ENCODE measurements at regions of chr9 and their contacts with region 1.

Region 1: DNA sequence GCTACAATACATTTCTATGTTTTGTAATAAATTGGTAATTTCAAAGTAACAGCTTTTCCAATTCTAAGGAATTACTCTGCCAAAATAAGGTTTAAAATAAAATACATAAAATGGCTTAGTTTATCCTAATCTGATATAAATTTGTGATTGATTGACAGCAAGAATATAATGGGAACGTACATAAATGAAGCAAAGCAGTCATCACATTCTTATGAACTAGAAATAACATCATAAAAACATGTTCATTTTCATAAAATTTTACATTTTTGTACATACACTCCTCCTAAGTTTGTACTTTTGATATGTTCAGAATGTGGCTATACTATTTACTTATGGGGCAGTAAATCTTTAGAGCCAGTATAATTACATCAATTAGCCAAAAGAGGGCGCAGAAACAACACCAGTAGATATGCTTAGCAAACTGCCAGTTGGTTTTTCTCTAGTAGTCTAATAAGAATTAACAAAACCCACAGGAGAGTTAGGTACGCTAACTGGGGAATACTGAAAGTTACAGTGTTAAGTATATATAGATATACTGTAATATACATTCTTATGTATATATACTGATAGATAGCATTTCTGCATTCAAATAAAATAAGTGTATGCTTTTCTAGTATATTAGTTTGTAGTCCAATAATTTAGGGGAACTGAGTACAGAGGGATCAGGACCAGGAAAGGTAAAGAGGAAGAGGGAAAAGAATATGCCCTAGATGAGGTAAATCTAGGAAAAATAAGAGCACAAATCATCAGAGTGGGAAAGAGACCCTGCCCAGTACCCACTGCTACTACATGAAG is 76.8 kb downstream of the ZDHHC21 start:
- DNase-seq: peak; percentile 39
- ATAC-seq: peak; percentile 82
- H3K4me3 ChIP-seq: no peak overlapping the region
- H3K27ac ChIP-seq: no peak overlapping the region
- H3K4me1 ChIP-seq: no peaks in the 10 kb centered on the region
- H3K27me3 ChIP-seq: no peaks in the 10 kb centered on the region
- CTCF ChIP-seq: peak; percentile 57
- EP300 ChIP-seq: no peak
- POLR2A ChIP-seq: no peak
- RAD21 ChIP-seq: peak; percentile 18; the same call in 1 of the 2 replicates

Region 2: GRCh38 chr9:14561929-14562405 is 54.4 kb before region 1 on chr9:
- CTCF ChIA-PET with region 1: no interaction called
- POLR2A ChIA-PET with region 1: no interaction called
- in situ Hi-C with region 1: no loop called
- intact Hi-C with region 1: loop called (anchors 10 kb)
- DNase-seq: peak; percentile 81
- ATAC-seq: peak; percentile 94
- H3K4me3 ChIP-seq: peak overlapping the region; percentile 38 to 59 (median 46)
- H3K27ac ChIP-seq: peak overlapping the region; percentile 49
- H3K4me1 ChIP-seq: peaks cover 64% of the 10 kb centered on the region
- H3K27me3 ChIP-seq: no peaks in the 10 kb centered on the region
- CTCF ChIP-seq: no peak
- EP300 ChIP-seq: no peak
- POLR2A ChIP-seq: no peak
- RAD21 ChIP-seq: no peak

Region 3: GRCh38 chr9:14652729-14653377 is 36.5 kb after region 1 on chr9:
- CTCF ChIA-PET with region 1: interaction called, 3 read pairs
- POLR2A ChIA-PET with region 1: no interaction called
- in situ Hi-C with region 1: no loop called
- intact Hi-C with region 1: loop called (anchors 1 kb)
- DNase-seq: peak; percentile 70
- ATAC-seq: peak; percentile 86
- H3K4me3 ChIP-seq: no peak overlapping the region
- H3K27ac ChIP-seq: no peak overlapping the region
- H3K4me1 ChIP-seq: no peaks in the 10 kb centered on the region
- H3K27me3 ChIP-seq: no peaks in the 10 kb centered on the region
- CTCF ChIP-seq: peak; percentile 76
- EP300 ChIP-seq: no peak
- POLR2A ChIP-seq: no peak
- RAD21 ChIP-seq: 0 out of 2 replicates have a peak, but pooled peaks have one; percentile 18

Region 4: GRCh38 chr9:14768405-14769229 is 152.2 kb after region 1 on chr9:
- CTCF ChIA-PET with region 1: interaction called, 13 read pairs
- POLR2A ChIA-PET with region 1: no interaction called
- in situ Hi-C with region 1: loop called (anchors 10 kb)
- intact Hi-C with region 1: loop called (anchors 1 kb)
- DNase-seq: peak; percentile 34
- ATAC-seq: no peak; the same call in none of the 3 replicates
- H3K4me3 ChIP-seq: no peak overlapping the region
- H3K27ac ChIP-seq: no peak overlapping the region
- H3K4me1 ChIP-seq: no peaks in the 10 kb centered on the region
- H3K27me3 ChIP-seq: no peaks in the 10 kb centered on the region
- CTCF ChIP-seq: peak; percentile 51
- EP300 ChIP-seq: no peak
- POLR2A ChIP-seq: no peak
- RAD21 ChIP-seq: no peak

Region 5: GRCh38 chr9:14779566-14780022 is 163.2 kb after region 1 on chr9:
- CTCF ChIA-PET with region 1: no interaction called
- POLR2A ChIA-PET with region 1: no interaction called
- in situ Hi-C with region 1: loop called (anchors 10 kb)
- intact Hi-C with region 1: no loop called
- DNase-seq: no peak
- ATAC-seq: no peak
- H3K4me3 ChIP-seq: no peak overlapping the region
- H3K27ac ChIP-seq: no peak overlapping the region
- H3K4me1 ChIP-seq: peaks cover 24% of the 10 kb centered on the region
- H3K27me3 ChIP-seq: no peaks in the 10 kb centered on the region
- CTCF ChIP-seq: no peak
- EP300 ChIP-seq: no peak
- POLR2A ChIP-seq: peak in 1 of 2 experiments; percentile 16; a peak in 1 of 4 replicates
- RAD21 ChIP-seq: no peak

Region 6: GRCh38 chr9:15142878-15143534 is 526.6 kb after region 1 on chr9:
- CTCF ChIA-PET with region 1: no interaction called
- POLR2A ChIA-PET with region 1: no interaction called
- in situ Hi-C with region 1: no loop called
- intact Hi-C with region 1: loop called (anchors 10 kb)
- DNase-seq: peak; percentile 50
- ATAC-seq: peak; percentile 92
- H3K4me3 ChIP-seq: no peak overlapping the region
- H3K27ac ChIP-seq: no peak overlapping the region
- H3K4me1 ChIP-seq: no peaks in the 10 kb centered on the region
- H3K27me3 ChIP-seq: peaks cover 2 to 13% of the 10 kb centered on the region in 2 experiments; a peak in 2 of 5 replicates
- CTCF ChIP-seq: peak; percentile 85
- EP300 ChIP-seq: no peak
- POLR2A ChIP-seq: no peak
- RAD21 ChIP-seq: peak; percentile 32

Measured in HepG2 (cell line).